Vagina (tissue), 2 donors: ENCODE measurements at regions of chr17 and their contacts with region 1.

Region 1: GRCh38 chr17:50626037-50626574 is 8.6 kb upstream of the ABCC3 start:
- DNase-seq: no peak
- H3K4me3 ChIP-seq: no peak overlapping the region
- H3K27ac ChIP-seq: no peak overlapping the region
- H3K4me1 ChIP-seq: no peaks in the 10 kb centered on the region
- H3K27me3 ChIP-seq: no peaks in the 10 kb centered on the region
- CTCF ChIP-seq: peak; percentile 62 to 68 (median 67)
- POLR2A ChIP-seq: no peak

Region 2: DNA sequence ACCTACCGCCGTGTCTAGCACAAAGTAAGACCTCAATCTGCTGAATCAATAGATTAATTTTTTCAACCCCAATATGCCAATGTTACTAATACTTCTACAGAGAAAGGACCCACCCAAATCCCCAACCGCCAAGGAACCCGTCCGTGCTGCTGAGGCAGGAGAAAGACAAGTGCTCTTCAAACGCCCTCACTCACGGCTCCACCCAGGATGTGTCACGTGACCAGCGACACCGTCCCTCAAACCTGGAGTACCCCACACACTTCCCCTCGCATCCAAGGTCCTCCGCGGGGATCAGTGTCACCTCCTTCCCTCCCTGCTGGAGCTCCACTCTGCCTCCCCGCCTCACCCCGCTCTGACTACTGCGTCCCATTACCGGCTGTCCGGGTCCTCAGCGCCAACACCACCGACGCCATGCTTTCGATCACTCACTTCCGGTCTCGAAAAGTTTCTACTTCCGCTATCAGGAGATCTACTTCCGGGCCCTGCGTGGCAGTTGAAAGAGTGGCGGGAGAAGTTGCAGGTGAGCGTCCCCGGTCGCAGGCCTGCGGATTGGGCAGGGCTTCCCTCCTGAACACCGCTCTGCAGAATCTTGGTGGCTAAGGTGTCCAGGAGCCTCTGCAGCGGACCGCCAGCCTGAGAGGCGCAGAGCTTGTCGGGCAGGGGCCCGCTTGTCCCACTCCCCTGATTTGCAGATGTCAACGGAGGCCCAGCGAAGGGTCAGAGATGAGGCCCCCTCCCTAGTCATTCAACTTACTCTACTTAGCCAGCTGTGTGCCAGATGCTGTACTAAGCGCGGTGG is 253.1 kb before region 1 on chr17 and contains the starts of genes EME1 and MRPL27:
- intact Hi-C with region 1: no loop called
- DNase-seq: no peak
- H3K4me3 ChIP-seq: peak within 1 kb of the TSS; percentile 73 to 78
- H3K27ac ChIP-seq: peak within 1 kb of the TSS; percentile 94
- H3K4me1 ChIP-seq: peaks cover 25% of the 10 kb centered on the region
- H3K27me3 ChIP-seq: no peaks in the 10 kb centered on the region
- CTCF ChIP-seq: no peak
- POLR2A ChIP-seq: no peak
- total RNA-seq, gene EME1: 2.9 TPM
- total RNA-seq, gene MRPL27: 41.7 TPM

Region 3: GRCh38 chr17:50547035-50547735 is 78.9 kb before region 1 on chr17 and contains the start of gene SPATA20:
- intact Hi-C with region 1: loop called (anchors 5 kb)
- DNase-seq: no peak
- H3K4me3 ChIP-seq: peak within 1 kb of the TSS; percentile 58 to 61
- H3K27ac ChIP-seq: peak within 1 kb of the TSS; percentile 93
- H3K4me1 ChIP-seq: peaks cover 26% of the 10 kb centered on the region
- H3K27me3 ChIP-seq: no peaks in the 10 kb centered on the region
- CTCF ChIP-seq: peak; percentile 89 to 99 (median 96)
- POLR2A ChIP-seq: peak in 1 of 2 donors; percentile 81
- total RNA-seq, gene SPATA20: 73.4 TPM

Region 4: DNA sequence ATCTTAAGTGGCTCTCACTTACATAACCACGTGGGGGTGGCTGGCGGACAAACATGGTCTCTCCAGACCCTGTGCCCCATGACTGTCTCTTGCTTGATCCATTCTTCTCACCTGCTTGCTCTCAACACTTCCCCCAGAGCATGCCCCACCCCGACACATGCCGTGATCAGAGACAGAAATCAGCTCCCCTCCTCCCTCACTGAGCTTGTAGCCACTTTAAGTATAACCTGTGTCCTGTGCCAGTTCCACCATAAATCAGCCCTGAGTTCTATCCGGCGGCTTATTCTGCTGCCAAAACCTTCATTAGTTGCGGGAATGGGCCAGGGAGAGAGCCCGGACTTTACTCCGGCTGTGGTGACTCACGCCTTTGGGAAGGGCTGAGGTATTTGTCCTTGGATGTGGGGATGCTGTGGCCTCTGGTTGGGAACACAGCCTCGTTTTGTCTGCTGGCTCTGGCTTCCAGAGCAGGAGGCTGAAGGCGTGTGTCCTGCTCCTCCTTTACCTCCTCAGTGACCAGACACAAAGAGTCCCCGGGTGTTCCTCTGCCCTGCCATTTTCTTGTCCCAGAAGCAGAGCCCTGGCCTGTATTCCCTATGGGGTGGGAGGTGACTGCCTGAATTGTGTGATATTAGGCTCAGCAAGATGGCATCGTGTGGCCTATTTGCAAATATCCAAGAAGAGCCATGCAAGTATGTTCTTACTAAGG is 60.5 kb after region 1 on chr17:
- intact Hi-C with region 1: loop called (anchors 5 kb)
- DNase-seq: peak in 1 of 2 donors; percentile 97
- H3K4me3 ChIP-seq: no peak overlapping the region
- H3K27ac ChIP-seq: peak overlapping the region; percentile 82
- H3K4me1 ChIP-seq: peaks cover 27% of the 10 kb centered on the region
- H3K27me3 ChIP-seq: no peaks in the 10 kb centered on the region
- CTCF ChIP-seq: no peak
- POLR2A ChIP-seq: no peak

Region 5: DNA sequence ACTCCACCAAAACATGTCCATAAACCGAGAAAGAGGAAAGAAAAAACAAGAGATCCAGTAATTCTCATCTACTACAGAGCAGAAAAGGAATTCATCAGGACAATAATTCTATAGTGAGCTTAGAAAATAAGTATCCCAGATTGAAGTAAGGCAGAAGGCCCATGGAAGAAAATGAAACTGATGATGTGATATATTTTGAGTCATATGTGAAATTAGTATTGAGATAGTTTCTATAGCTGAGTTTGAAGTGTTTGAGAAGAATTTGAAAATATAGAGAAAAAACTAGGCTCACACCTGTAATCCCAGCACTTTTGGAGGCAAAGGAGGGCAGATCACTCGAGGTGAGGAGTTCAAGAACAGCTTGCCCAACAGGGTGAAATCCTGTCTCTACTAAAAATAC is 113.0 kb after region 1 on chr17:
- intact Hi-C with region 1: no loop called
- DNase-seq: no peak
- H3K4me3 ChIP-seq: no peak overlapping the region
- H3K27ac ChIP-seq: no peak overlapping the region
- H3K4me1 ChIP-seq: peaks cover 19% of the 10 kb centered on the region
- H3K27me3 ChIP-seq: no peaks in the 10 kb centered on the region
- CTCF ChIP-seq: no peak
- POLR2A ChIP-seq: no peak